IMR-90 (cell line): ENCODE measurements at regions of chr17 and their contacts with region 1.

Region 1: DNA sequence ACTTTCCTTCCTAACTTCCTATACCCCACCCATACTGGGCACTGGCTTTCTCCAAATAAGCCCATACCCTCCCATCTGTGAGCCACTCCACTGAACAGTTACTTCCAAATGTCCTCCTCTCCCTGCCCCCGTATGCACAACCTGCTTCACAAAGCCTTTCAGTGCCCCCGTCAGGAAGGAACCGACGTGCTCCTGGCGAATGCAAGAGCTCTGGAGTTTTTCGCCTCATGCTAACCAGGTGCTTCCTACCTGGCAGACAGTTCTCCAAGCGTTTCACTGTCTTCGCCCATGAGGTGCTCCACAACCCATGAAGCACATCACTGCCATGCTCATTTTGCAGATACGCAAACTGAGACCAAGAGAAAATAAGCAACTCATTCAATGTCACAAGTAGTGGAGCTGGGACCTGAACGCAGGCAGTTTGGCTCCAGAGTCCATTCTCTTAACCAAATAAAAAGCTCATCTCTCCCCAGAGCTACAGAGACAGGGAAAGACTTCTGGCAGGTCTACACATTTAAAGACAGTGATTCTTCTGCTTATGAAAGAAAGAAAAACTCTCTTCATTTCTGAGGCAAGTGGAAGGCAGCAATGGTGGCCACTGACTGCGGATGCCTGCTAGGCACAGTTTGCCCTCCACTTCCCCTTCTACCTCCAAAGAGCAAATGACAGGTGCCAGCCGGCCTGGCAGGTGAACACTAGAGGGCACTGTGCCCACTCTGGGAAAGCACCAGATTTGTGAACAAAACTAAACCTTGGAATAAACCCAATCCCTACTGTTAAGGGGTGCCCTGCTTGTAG is 23.8 kb downstream of the SPHK1 start:
- DNase-seq: peak; percentile 39
- ATAC-seq: peak; percentile 42; the same call in 1 of the 2 replicates
- H3K4me3 ChIP-seq: no peak overlapping the region
- H3K27ac ChIP-seq: no peak overlapping the region
- H3K4me1 ChIP-seq: peaks cover 7% of the 10 kb centered on the region; the same call in 1 of the 2 replicates
- H3K27me3 ChIP-seq: no peaks in the 10 kb centered on the region
- CTCF ChIP-seq: peak; percentile 76
- POLR2A ChIP-seq: no peak
- RAD21 ChIP-seq: peak; percentile 84

Region 2: DNA sequence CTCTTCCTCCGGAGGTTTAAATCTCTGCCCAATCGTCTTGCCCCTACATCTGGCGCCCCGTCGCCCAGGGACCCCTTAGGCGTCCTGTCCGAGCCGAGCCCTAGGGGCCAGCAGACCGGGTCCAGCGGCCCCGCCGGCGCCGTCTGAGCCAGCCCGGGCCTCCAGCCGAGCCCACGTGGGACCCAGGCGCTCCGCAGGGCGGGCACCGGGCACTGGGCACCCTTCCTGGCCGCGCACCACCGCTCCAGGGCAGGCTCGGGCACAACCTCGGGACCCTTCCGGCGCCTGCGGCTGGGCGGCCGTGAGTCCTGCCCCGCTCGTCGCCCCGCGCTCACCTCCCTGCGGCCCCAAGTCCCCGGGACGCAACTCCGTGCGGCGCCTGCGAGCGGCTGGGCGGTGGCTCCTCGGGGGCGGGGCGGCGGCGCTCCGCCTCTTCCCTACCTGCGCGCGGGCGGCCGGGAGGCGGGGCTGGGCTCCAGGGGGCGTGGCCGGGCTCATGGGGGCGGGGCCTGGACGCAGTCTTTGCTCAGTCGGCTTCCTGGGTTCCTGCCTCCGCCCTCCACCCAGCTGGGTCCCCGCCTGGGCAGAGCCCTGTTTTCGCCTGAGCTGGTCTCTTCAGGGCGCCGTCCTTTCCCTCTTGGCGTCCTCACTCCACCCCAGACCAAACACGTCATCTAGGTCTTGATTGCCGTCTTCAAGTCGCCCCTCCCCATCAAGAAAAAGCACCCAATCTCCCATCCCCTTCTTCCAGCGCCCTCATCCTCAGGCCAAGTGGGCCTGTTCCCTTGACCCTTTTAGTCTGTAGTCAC is 93.0 kb after region 1 on chr17 and contains the start of gene RHBDF2:
- CTCF ChIA-PET with region 1: no interaction called
- POLR2A ChIA-PET with region 1: no interaction called
- dilution Hi-C with region 1: no loop called
- in situ Hi-C with region 1: loop called (anchors 10 kb)
- intact Hi-C with region 1: loop called (anchors 1 kb)
- DNase-seq: peak; percentile 53
- ATAC-seq: peak; percentile 86
- H3K4me3 ChIP-seq: peak within 1 kb of the TSS; percentile 82
- H3K27ac ChIP-seq: peak within 1 kb of the TSS; percentile 26
- H3K4me1 ChIP-seq: peaks cover 27% of the 10 kb centered on the region
- H3K27me3 ChIP-seq: no peaks in the 10 kb centered on the region
- CTCF ChIP-seq: no peak
- POLR2A ChIP-seq: no peak; the same call in 1 of the 2 replicates
- RAD21 ChIP-seq: no peak
- total RNA-seq, gene RHBDF2: 1.3 and 1.4 TPM in 2 replicates

Region 3: DNA sequence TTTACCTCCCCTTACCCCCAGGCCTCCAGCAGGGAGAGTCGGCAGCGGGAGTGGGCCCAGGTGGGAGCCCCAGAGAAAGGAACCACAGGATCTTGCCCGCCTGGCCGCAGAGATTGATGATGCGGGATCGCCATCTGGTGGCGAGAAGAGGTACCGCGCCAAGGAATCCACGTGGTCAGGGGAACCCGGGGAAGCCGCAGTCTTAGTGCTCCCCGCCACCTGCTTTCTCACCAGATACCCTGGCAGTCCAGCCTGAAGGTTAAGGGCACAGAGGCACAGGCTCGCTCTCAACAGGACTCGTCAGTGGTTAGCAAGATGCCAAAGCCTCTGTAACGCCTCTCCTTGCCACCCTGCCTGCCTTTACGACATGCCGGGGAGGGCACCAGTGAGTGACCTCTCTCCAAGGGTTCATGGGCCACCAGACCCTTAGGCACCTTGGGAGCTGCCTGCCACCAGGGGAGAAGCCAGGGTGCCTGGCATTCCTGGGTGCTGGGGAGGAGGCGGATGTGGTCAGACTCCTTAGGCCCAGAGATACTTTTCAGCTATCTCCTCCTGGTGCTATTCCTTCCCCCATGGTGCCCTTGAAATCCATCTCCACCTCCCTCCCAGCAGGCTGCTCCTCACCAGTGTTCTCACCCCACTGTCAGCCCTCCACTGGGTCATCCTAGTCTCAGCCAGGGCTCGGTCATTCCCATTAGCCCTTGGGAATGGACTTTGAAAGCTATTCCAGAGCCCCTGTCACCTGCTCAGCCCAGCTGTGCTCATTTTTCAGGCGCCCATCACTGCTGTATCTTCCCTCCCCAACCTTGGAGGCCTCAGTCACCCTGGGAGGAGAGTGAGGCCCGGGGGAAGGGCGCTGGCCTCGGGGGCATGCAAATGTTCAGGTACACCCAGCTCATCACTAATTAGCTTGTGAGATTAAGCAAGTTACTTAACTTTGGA is 98.4 kb after region 1 on chr17:
- CTCF ChIA-PET with region 1: no interaction called
- POLR2A ChIA-PET with region 1: no interaction called
- dilution Hi-C with region 1: no loop called
- in situ Hi-C with region 1: loop called (anchors 10 kb)
- intact Hi-C with region 1: loop called (anchors 1 kb)
- DNase-seq: peak; percentile 54
- ATAC-seq: peak; percentile 88
- H3K4me3 ChIP-seq: no peak overlapping the region
- H3K27ac ChIP-seq: no peak overlapping the region
- H3K4me1 ChIP-seq: peaks cover 13% of the 10 kb centered on the region
- H3K27me3 ChIP-seq: peaks cover 13% of the 10 kb centered on the region
- CTCF ChIP-seq: peak; percentile 97
- POLR2A ChIP-seq: peak; percentile 42; the same call in 1 of the 2 replicates
- RAD21 ChIP-seq: peak; percentile 97